ENCODE measurements at regions of chr9 and their contacts with region 1.

Region 1: DNA sequence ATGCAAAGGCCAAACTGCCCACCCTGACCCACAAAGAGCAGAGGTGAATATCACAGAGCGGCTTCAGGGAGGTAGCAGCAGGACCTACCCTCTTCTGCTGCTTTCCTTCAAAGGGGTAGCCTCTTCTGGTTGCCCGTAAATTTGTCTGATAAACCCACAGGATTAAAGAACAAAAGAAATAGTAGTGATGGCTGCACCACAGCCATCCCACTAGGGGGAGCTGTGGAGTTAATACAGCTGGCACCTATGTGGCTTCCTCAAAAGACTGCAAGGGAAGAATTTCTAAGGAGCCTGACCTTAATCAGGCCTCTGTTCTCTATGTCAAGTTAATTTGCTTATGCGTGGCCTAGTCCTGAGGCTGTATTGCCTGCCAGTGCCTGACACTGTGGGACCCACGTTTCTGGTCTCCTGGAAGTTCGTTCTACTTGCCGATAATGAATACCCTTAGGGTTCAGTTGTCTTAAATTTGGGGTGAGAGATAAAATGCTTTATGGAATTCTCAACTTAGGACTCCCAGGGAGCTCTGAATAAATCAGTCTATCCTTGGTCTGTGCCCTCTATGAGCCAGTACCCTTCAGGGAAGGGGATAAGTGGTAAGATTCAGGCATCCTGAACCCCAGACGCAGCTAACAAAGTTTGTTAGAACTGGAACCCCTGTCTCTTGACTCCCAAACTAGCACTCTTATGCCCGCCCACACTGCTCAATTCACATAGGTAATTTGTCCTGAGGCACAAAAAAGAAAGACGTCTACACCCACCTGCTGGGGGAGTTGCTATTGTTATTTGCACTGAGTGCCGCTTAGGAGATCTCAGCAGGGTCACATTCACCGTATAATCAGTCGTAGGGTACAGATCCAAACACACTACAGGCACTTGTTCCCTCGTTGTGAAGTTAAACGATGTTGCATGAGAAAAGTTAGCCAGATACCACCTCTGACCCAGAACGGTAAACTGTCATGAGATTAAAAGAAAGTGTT is 77.1 kb downstream of the SUSD1 start:
- DNase-seq: peak; percentile 61
- H3K4me3 ChIP-seq: no peak overlapping the region
- H3K27ac ChIP-seq: no peak overlapping the region
- H3K27me3 ChIP-seq: no peaks in the 10 kb centered on the region
- CTCF ChIP-seq: peak; percentile 93

Region 2: GRCh38 chr9:112086627-112087026 is 11.4 kb before region 1 on chr9:
- CTCF ChIA-PET with region 1: interaction called, 20 read pairs
- POLR2A ChIA-PET with region 1: no interaction called
- DNase-seq: no peak
- H3K4me3 ChIP-seq: no peak overlapping the region
- H3K27ac ChIP-seq: no peak overlapping the region
- H3K27me3 ChIP-seq: no peaks in the 10 kb centered on the region
- CTCF ChIP-seq: peak; percentile 57

Region 3: GRCh38 chr9:112125951-112126388 is 28.0 kb after region 1 on chr9:
- CTCF ChIA-PET with region 1: no interaction called
- POLR2A ChIA-PET with region 1: no interaction called
- DNase-seq: no peak
- H3K4me3 ChIP-seq: no peak overlapping the region
- H3K27ac ChIP-seq: no peak overlapping the region
- H3K27me3 ChIP-seq: no peaks in the 10 kb centered on the region
- CTCF ChIP-seq: no peak

Region 4: DNA sequence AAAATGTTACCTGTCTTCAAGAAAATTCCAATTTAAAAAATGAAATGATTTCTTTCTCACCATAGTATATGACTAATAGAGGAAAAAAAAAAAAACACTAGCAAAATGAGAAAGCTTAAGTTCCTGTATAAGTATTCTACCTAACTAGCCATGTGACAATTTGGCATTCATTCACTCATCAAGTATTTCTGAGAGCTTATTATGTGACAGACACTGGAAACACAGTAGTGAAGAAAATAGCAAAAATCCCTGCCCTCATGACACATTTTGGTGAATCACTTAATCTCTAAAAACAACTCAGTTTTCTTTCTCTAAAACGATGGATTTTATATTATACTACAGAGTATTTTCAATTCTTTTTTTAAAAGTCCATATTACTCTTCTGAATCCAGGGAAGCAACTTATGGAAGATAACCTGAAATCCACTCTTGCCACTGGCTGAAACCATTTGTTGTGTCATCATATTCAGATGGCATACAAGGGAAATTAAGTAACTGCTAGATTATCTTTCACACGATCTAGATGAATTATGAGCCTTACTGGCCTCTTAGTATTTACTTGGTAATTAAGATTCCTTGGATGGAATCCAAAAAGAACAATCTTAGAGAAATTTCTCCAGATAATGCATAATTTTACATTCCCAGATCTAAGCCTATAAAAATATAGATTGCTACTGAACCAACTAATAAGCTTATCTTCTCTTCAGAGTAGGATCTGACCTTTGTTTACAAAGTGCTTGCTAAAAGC is 229.9 kb after region 1 on chr9:
- CTCF ChIA-PET with region 1: interaction called, 14 read pairs
- POLR2A ChIA-PET with region 1: interaction called, 3 read pairs
- DNase-seq: no peak
- H3K4me3 ChIP-seq: no peak overlapping the region
- H3K27ac ChIP-seq: no peak overlapping the region
- H3K27me3 ChIP-seq: no peaks in the 10 kb centered on the region
- CTCF ChIP-seq: no peak

Region 5: GRCh38 chr9:112379177-112380101 is 281.4 kb after region 1 on chr9:
- CTCF ChIA-PET with region 1: interaction called, 17 read pairs
- POLR2A ChIA-PET with region 1: no interaction called
- DNase-seq: peak; percentile 95
- H3K4me3 ChIP-seq: peak overlapping the region; percentile 91
- H3K27ac ChIP-seq: peak overlapping the region; percentile 97
- H3K27me3 ChIP-seq: no peaks in the 10 kb centered on the region
- CTCF ChIP-seq: no peak

Measured in AG04450 (cell line).